Activated CD4-positive, alpha-beta T cell treated with anti-CD3 and anti-CD28 coated beads for 36 hours (primary cell): ENCODE measurements at regions of chr16 and their contacts with region 1.

Region 1: DNA sequence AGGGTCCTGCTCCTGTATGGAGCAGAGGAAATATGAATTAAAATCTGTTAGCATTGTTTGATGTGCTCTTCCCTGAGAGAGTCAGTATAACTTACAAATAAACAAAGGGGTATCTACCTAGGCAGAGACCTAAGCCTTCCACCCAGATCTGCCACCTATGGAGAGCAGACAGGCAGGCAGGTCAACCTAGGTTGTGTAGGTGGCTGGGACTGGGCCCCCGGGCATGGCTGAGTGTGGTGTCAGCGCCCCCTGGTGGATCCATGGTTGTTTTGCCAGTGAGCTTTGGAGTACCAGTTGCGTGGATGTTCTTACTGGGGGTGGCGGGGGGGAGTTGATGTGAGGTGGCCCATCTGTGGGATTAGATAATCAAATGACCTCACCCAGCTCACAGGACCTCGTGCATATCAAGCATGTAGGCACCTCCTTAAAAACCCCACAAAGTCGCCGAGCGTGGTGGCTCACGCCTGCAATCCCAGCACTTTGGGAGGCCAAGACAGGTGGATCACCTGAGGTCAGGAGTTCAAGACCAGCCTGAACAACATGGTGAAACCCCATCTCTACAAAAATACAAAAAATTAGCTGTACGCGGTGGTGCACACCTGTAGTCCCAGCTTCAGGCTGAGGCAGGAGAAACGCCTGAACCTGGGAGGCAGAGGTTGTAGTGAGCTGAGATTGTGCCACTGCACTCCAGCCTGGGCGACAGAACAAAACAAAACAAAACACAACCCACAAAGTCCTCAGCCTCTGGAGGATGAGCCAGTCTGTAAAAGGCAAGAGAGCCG is 17.6 kb downstream of the DUS2 start:
- DNase-seq: peak; percentile 94
- ATAC-seq: peak; percentile 98
- H3K4me3 Mint-ChIP-seq: no peak overlapping the region
- H3K27ac Mint-ChIP-seq: peak overlapping the region; percentile 31
- H3K4me1 Mint-ChIP-seq: peaks cover 7% of the 10 kb centered on the region
- H3K27me3 Mint-ChIP-seq: no peaks in the 10 kb centered on the region

Region 2: DNA sequence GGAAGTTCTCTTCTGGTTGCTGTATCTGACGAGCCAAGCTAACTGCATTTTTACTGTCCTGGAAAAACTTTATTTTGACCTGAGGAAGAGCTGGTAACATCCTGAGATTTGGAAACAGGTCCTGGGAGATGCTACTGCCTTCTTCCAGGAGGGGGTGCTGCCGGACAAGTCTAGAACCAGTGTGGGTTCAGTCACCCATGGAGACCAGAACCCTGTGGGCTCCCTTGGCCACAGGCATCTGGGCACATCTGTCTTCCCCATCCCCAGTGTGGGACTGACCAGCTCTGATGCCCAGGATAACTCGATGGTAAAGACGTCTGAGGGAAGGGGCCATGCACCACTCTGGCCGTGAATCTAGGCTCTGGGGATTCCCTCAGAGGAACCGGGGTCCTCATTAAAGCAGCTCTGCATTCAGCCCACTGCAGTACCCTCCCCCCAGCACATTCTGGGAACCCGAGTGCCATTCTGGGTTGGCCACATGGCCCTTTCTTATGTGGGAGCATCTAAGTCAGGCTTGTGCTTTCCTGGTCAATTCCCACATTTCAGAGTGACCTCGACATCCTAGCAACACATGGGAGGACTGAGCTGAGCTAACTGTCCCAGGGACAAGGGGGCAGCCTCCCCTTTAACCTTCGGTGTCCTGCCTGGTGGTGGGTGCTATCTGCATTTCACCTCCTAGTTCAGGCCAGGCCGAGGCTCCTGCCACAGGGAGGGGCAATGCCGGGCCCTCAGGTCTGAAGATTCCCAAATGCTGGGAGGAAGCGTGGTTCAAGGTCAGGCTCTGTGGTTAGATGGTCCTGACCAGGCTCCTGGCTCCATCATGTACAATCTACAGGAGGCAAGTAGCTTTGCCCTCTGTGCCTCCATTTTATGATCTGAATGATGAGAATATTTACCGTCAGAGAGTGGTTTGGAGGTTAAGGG is 367.7 kb before region 1 on chr16:
- CTCF ChIA-PET with region 1: interaction called, 3 read pairs
- POLR2A ChIA-PET with region 1: no interaction called
- intact Hi-C with region 1: loop called in 1 of 2 experiments (anchors 10 kb)
- DNase-seq: peak; percentile 77
- ATAC-seq: peak; percentile 25
- H3K4me3 Mint-ChIP-seq: no peak overlapping the region
- H3K27ac Mint-ChIP-seq: no peak overlapping the region
- H3K4me1 Mint-ChIP-seq: peaks cover 3% of the 10 kb centered on the region
- H3K27me3 Mint-ChIP-seq: no peaks in the 10 kb centered on the region

Region 3: GRCh38 chr16:67883872-67884261 is 156.8 kb before region 1 on chr16:
- CTCF ChIA-PET with region 1: interaction called, 4 read pairs
- POLR2A ChIA-PET with region 1: no interaction called
- intact Hi-C with region 1: loop called (anchors 1 to 2 kb)
- DNase-seq: peak; percentile 85
- ATAC-seq: peak; percentile 92
- H3K4me3 Mint-ChIP-seq: no peak overlapping the region
- H3K27ac Mint-ChIP-seq: no peak overlapping the region
- H3K4me1 Mint-ChIP-seq: no peaks in the 10 kb centered on the region
- H3K27me3 Mint-ChIP-seq: no peaks in the 10 kb centered on the region

Region 4: GRCh38 chr16:67968400-67969253 is 72.1 kb before region 1 on chr16 and contains the start of gene SLC12A4:
- CTCF ChIA-PET with region 1: interaction called, 7 read pairs
- POLR2A ChIA-PET with region 1: interaction called, 12 read pairs
- intact Hi-C with region 1: loop called in 1 of 2 experiments (anchors 2 kb)
- DNase-seq: peak; percentile 94
- ATAC-seq: peak; percentile 90
- H3K4me3 Mint-ChIP-seq: peak within 1 kb of the TSS; percentile 84
- H3K27ac Mint-ChIP-seq: peak within 1 kb of the TSS; percentile 80
- H3K4me1 Mint-ChIP-seq: peaks cover 14% of the 10 kb centered on the region
- H3K27me3 Mint-ChIP-seq: no peaks in the 10 kb centered on the region
- total RNA-seq, gene SLC12A4: 21.8 to 25.8 TPM

Region 5: GRCh38 chr16:68028996-68029395 is 11.7 kb before region 1 on chr16:
- CTCF ChIA-PET with region 1: interaction called, 16 read pairs
- POLR2A ChIA-PET with region 1: interaction called, 6 read pairs
- intact Hi-C with region 1: no loop called
- DNase-seq: no peak
- ATAC-seq: no peak
- H3K4me3 Mint-ChIP-seq: no peak overlapping the region
- H3K27ac Mint-ChIP-seq: no peak overlapping the region
- H3K4me1 Mint-ChIP-seq: peaks cover 6% of the 10 kb centered on the region
- H3K27me3 Mint-ChIP-seq: no peaks in the 10 kb centered on the region

Region 6: GRCh38 chr16:68116256-68116867 is 75.7 kb after region 1 on chr16:
- CTCF ChIA-PET with region 1: no interaction called
- POLR2A ChIA-PET with region 1: no interaction called
- intact Hi-C with region 1: no loop called
- DNase-seq: no peak
- ATAC-seq: peak; percentile 48
- H3K4me3 Mint-ChIP-seq: no peak overlapping the region
- H3K27ac Mint-ChIP-seq: no peak overlapping the region
- H3K4me1 Mint-ChIP-seq: peaks cover 87% of the 10 kb centered on the region
- H3K27me3 Mint-ChIP-seq: no peaks in the 10 kb centered on the region

Region 7: DNA sequence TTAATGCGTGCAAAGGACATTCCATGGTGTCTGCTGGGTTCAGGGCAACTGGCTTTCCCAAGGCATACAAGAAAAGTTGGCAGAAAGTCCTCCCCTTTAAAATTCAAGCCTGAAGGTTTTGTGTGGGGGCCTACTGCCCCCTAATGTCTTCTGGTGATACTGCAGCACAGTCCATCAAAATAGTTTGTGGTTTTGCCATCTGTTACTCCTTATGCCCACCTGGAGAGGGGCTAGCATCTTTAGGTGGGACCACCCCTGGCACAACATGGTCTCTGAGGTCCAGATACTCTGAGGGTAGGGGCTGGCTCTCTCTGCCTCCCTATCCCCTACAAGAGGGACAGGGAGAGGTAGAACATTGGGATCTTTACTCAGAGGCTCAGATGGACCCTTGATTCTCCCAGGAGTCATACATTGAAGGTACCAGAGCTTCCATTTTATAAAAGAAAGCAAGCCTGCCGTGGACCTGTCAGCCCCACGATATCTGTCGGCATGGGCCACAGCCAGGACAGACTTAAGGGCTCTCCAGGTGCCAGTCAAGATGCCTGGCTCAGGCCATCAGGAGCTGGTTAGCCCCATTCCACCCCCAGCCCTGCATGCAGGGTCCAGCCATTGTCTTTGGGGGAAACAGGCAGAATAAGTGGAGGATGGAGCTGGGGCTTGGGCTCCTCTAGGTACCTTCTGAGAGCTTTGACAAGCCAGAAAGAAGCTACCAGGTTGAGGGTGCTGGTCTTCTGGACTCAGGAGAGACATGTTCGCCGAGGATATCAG is 188.9 kb after region 1 on chr16:
- CTCF ChIA-PET with region 1: interaction called, 5 read pairs
- POLR2A ChIA-PET with region 1: no interaction called
- intact Hi-C with region 1: loop called in 1 of 2 experiments (anchors 1 kb)
- DNase-seq: peak; percentile 60
- ATAC-seq: no peak
- H3K4me3 Mint-ChIP-seq: no peak overlapping the region
- H3K27ac Mint-ChIP-seq: peak overlapping the region; percentile 48
- H3K4me1 Mint-ChIP-seq: peaks cover 48% of the 10 kb centered on the region
- H3K27me3 Mint-ChIP-seq: no peaks in the 10 kb centered on the region